ENCODE measurements at regions of chr18 and their contacts with region 1.

Region 1: GRCh38 chr18:31977270-31977872 is 34.4 kb upstream of the TRAPPC8 start:
- DNase-seq: peak; percentile 61
- ATAC-seq: no peak
- H3K4me3 ChIP-seq: no peak overlapping the region
- H3K4me3 Mint-ChIP-seq: no peak overlapping the region
- H3K27ac ChIP-seq: no peak overlapping the region
- H3K27ac Mint-ChIP-seq: no peak overlapping the region
- H3K4me1 ChIP-seq: no peaks in the 10 kb centered on the region
- H3K4me1 Mint-ChIP-seq: no peaks in the 10 kb centered on the region
- H3K27me3 ChIP-seq: no peaks in the 10 kb centered on the region
- H3K27me3 Mint-ChIP-seq: no peaks in the 10 kb centered on the region
- CTCF ChIP-seq: peak; percentile 76

Region 2: GRCh38 chr18:31741097-31741735 is 236.2 kb before region 1 on chr18:
- CTCF ChIA-PET with region 1: interaction called, 9 read pairs
- POLR2A ChIA-PET with region 1: no interaction called
- intact Hi-C with region 1: loop called (anchors 1 kb)
- DNase-seq: peak; percentile 61
- ATAC-seq: no peak
- H3K4me3 ChIP-seq: no peak overlapping the region
- H3K4me3 Mint-ChIP-seq: no peak overlapping the region
- H3K27ac ChIP-seq: no peak overlapping the region
- H3K27ac Mint-ChIP-seq: no peak overlapping the region
- H3K4me1 ChIP-seq: no peaks in the 10 kb centered on the region
- H3K4me1 Mint-ChIP-seq: no peaks in the 10 kb centered on the region
- H3K27me3 ChIP-seq: no peaks in the 10 kb centered on the region
- H3K27me3 Mint-ChIP-seq: no peaks in the 10 kb centered on the region
- CTCF ChIP-seq: peak; percentile 95

Region 3: GRCh38 chr18:31920277-31920676 is 57.1 kb before region 1 on chr18:
- CTCF ChIA-PET with region 1: interaction called, 5 read pairs
- POLR2A ChIA-PET with region 1: no interaction called
- intact Hi-C with region 1: loop called (anchors 10 kb)
- DNase-seq: no peak
- ATAC-seq: no peak
- H3K4me3 ChIP-seq: no peak overlapping the region
- H3K4me3 Mint-ChIP-seq: no peak overlapping the region
- H3K27ac ChIP-seq: no peak overlapping the region
- H3K27ac Mint-ChIP-seq: peak overlapping the region; percentile 53
- H3K4me1 ChIP-seq: no peaks in the 10 kb centered on the region
- H3K4me1 Mint-ChIP-seq: no peaks in the 10 kb centered on the region
- H3K27me3 ChIP-seq: no peaks in the 10 kb centered on the region
- H3K27me3 Mint-ChIP-seq: no peaks in the 10 kb centered on the region
- CTCF ChIP-seq: no peak

Region 4: GRCh38 chr18:31942999-31943865 is 34.1 kb before region 1 on chr18 and contains the start of gene TRAPPC8:
- CTCF ChIA-PET with region 1: interaction called, 12 read pairs
- POLR2A ChIA-PET with region 1: no interaction called
- intact Hi-C with region 1: loop called (anchors 2 kb)
- DNase-seq: peak; percentile 98
- ATAC-seq: peak; percentile 80
- H3K4me3 ChIP-seq: peak within 1 kb of the TSS; percentile 83 to 97 (median 94)
- H3K4me3 Mint-ChIP-seq: peak within 1 kb of the TSS; percentile 100
- H3K27ac ChIP-seq: peak within 1 kb of the TSS; percentile 98
- H3K27ac Mint-ChIP-seq: peak within 1 kb of the TSS; percentile 100
- H3K4me1 ChIP-seq: peaks cover 24 to 31% of the 10 kb centered on the region in 2 donors
- H3K4me1 Mint-ChIP-seq: peaks cover 39% of the 10 kb centered on the region
- H3K27me3 ChIP-seq: no peaks in the 10 kb centered on the region
- H3K27me3 Mint-ChIP-seq: no peaks in the 10 kb centered on the region
- CTCF ChIP-seq: no peak
- total RNA-seq, gene TRAPPC8: 89.8 and 95.5 TPM in 2 replicates

Region 5: GRCh38 chr18:31990823-31991222 is 13.5 kb after region 1 on chr18:
- CTCF ChIA-PET with region 1: interaction called, 10 read pairs
- POLR2A ChIA-PET with region 1: no interaction called
- intact Hi-C with region 1: no loop called
- DNase-seq: peak; percentile 16
- ATAC-seq: peak; percentile 63
- H3K4me3 ChIP-seq: no peak overlapping the region
- H3K4me3 Mint-ChIP-seq: peak overlapping the region; percentile 45
- H3K27ac ChIP-seq: peak overlapping the region in 1 of 2 donors; percentile 61
- H3K27ac Mint-ChIP-seq: peak overlapping the region; percentile 10
- H3K4me1 ChIP-seq: peaks cover 10 to 15% of the 10 kb centered on the region in 2 donors
- H3K4me1 Mint-ChIP-seq: peaks cover 16% of the 10 kb centered on the region
- H3K27me3 ChIP-seq: no peaks in the 10 kb centered on the region
- H3K27me3 Mint-ChIP-seq: no peaks in the 10 kb centered on the region
- CTCF ChIP-seq: no peak

Region 6: DNA sequence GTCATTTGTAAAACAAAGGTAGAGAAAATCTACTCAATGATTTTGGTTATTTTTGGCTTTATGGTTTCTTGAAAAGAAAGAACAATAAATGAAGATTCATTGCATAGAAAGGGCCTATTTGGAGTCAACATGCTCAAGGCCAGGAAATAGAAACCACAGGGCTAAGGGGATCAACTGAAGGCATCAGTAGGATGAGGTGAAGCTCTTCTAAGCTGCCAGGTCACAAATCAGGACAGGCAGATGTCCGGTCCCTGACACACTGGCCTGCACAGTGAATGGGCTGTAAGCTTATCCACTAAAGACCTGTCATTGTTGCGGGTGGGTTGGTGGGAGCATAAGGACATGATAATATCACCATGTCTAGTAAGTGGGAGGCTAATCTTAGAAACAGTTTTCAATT is 82.7 kb after region 1 on chr18:
- CTCF ChIA-PET with region 1: no interaction called
- POLR2A ChIA-PET with region 1: no interaction called
- intact Hi-C with region 1: no loop called
- DNase-seq: no peak
- ATAC-seq: no peak
- H3K4me3 ChIP-seq: no peak overlapping the region
- H3K4me3 Mint-ChIP-seq: no peak overlapping the region
- H3K27ac ChIP-seq: no peak overlapping the region
- H3K27ac Mint-ChIP-seq: no peak overlapping the region
- H3K4me1 ChIP-seq: no peaks in the 10 kb centered on the region
- H3K4me1 Mint-ChIP-seq: no peaks in the 10 kb centered on the region
- H3K27me3 ChIP-seq: no peaks in the 10 kb centered on the region
- H3K27me3 Mint-ChIP-seq: no peaks in the 10 kb centered on the region
- CTCF ChIP-seq: no peak